Activated B cell treated with CpG ODN at 0.5 μM for 24 hours (primary cell): ENCODE measurements at regions of chr3 and their contacts with region 1.

Region 1: DNA sequence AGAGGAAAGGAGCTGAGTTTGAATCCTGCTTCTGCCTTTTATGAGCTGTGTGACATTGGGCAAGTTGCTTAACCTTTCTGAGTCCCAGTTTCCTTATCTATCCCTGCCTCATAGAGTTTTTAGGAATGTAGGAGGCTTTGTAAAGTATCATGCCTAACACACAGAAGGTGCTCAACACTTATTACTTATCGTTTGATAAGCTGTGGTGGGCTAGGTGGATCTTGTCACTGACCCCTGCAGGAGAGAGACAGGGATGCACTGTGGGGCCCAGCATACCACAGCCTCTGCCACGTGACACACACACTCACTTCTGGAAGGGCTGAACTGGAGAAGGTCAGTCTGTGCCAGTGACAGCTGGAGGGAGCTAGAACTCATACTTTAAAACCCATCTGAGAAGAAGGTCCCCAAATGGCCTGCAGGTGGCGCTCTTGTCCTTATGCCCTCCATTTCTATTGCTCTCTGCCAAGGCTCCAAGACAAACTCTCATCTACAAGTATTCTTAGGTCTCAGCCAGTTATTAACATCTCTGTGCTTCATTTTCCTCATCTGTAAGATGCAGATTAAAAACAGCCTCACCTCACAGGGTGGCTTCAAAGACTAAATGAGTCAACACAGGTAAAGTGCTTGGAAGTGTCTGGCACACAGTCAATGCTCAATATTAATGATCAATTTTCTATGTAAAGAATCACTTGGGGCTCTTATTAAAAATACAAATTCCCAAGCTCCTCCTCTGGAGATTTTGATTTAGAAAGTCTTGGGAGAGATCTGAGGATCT is 57.5 kb upstream of the HACD2 start:
- DNase-seq: peak; percentile 28
- ATAC-seq: peak; percentile 70
- H3K4me3 Mint-ChIP-seq: no peak overlapping the region
- H3K27ac Mint-ChIP-seq: no peak overlapping the region
- H3K4me1 Mint-ChIP-seq: no peaks in the 10 kb centered on the region
- H3K27me3 Mint-ChIP-seq: no peaks in the 10 kb centered on the region
- CTCF ChIP-seq: no peak

Region 2: GRCh38 chr3:123700791-123701722 is 58.7 kb after region 1 on chr3:
- CTCF ChIA-PET with region 1: interaction called, 5 read pairs
- POLR2A ChIA-PET with region 1: no interaction called
- intact Hi-C with region 1: loop called (anchors 1 kb)
- DNase-seq: no peak
- ATAC-seq: no peak
- H3K4me3 Mint-ChIP-seq: no peak overlapping the region
- H3K27ac Mint-ChIP-seq: no peak overlapping the region
- H3K4me1 Mint-ChIP-seq: peaks cover 6% of the 10 kb centered on the region
- H3K27me3 Mint-ChIP-seq: peaks cover 1% of the 10 kb centered on the region
- CTCF ChIP-seq: no peak

Region 3: DNA sequence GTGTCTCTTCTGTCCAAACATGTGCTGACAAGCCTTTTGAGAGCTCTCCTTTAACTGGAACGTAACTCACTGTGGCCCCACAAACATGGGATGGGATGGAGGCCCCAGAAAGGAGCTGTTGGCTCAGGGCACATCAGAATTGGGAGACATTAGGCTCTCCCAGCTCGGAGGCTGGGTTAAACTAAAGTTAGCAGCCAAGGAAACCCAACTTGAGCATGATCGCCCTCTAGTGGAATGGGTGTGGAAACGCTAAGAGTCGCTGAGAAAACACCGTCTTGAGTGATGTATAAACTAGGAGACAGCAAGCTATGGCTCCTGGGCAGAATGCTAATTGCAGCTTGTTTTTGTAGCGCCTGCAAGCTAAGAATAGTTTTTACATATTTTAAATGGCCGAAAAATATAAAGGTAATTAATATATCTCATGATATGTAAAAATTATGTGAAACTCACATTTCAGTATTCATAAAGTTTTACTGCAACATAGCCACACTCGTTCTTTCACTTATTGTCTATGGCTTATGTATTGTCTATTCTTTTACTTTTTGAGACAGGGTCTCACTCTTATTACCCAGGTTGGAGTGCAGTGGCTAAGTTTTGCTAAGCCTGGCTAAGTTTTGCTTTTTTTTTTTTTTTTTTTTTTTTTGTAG is 81.3 kb after region 1 on chr3:
- CTCF ChIA-PET with region 1: interaction called, 11 read pairs
- POLR2A ChIA-PET with region 1: no interaction called
- intact Hi-C with region 1: loop called (anchors 1 kb)
- DNase-seq: no peak
- ATAC-seq: peak; percentile 65
- H3K4me3 Mint-ChIP-seq: no peak overlapping the region
- H3K27ac Mint-ChIP-seq: no peak overlapping the region
- H3K4me1 Mint-ChIP-seq: no peaks in the 10 kb centered on the region
- H3K27me3 Mint-ChIP-seq: peaks cover 4% of the 10 kb centered on the region
- CTCF ChIP-seq: peak; percentile 39

Region 4: GRCh38 chr3:123953735-123954134 is 311.4 kb after region 1 on chr3:
- CTCF ChIA-PET with region 1: no interaction called
- POLR2A ChIA-PET with region 1: no interaction called
- intact Hi-C with region 1: no loop called
- DNase-seq: no peak
- ATAC-seq: no peak
- H3K4me3 Mint-ChIP-seq: no peak overlapping the region
- H3K27ac Mint-ChIP-seq: no peak overlapping the region
- H3K4me1 Mint-ChIP-seq: peaks cover 9% of the 10 kb centered on the region
- H3K27me3 Mint-ChIP-seq: no peaks in the 10 kb centered on the region
- CTCF ChIP-seq: no peak